A549 (cell line): ENCODE measurements at regions of chr16 and their contacts with region 1.

Region 1: GRCh38 chr16:29678691-29679267 is at the start of gene QPRT:
- DNase-seq: peak in 1 of 2 experiments; percentile 21
- ATAC-seq: peak; percentile 60 to 76; a peak in 5 of 6 replicates
- H3K4me3 ChIP-seq: no peak within 1 kb of the TSS
- H3K27ac ChIP-seq: peak within 1 kb of the TSS in 1 of 2 experiments; percentile 73; a peak in 3 of 6 replicates
- H3K4me1 ChIP-seq: peaks cover 4% of the 10 kb centered on the region; the same call in 1 of the 3 replicates
- CTCF ChIP-seq: no peak
- EP300 ChIP-seq: no peak
- POLR2A ChIP-seq: no peak
- RAD21 ChIP-seq: no peak
- polyA plus RNA-seq, gene QPRT: 1.9 and 2.1 TPM in 2 replicates

Region 2: GRCh38 chr16:29694384-29695195 is 15.8 kb after region 1 on chr16:
- CTCF ChIA-PET with region 1: interaction called, 29 read pairs
- POLR2A ChIA-PET with region 1: no interaction called
- DNase-seq: no peak
- ATAC-seq: 0 out of 6 replicates have a peak, but pooled peaks of 1 of the 2 experiments have one; percentile 5
- H3K4me3 ChIP-seq: no peak overlapping the region
- H3K27ac ChIP-seq: no peak overlapping the region
- H3K4me1 ChIP-seq: peaks cover 5% of the 10 kb centered on the region; the same call in 1 of the 3 replicates
- CTCF ChIP-seq: no peak
- EP300 ChIP-seq: no peak
- POLR2A ChIP-seq: no peak
- RAD21 ChIP-seq: no peak